ENCODE measurements at regions of chr9 and their contacts with region 1.

Region 1: GRCh38 chr9:68704814-68705530 is at the start of gene PIP5K1B:
- DNase-seq: peak; percentile 76
- H3K4me3 Mint-ChIP-seq: peak within 1 kb of the TSS; percentile 98
- H3K27ac Mint-ChIP-seq: no peak within 1 kb of the TSS
- H3K4me1 Mint-ChIP-seq: peaks cover 10% of the 10 kb centered on the region
- H3K27me3 Mint-ChIP-seq: peaks cover 36% of the 10 kb centered on the region
- CTCF ChIP-seq: no peak
- total RNA-seq, gene PIP5K1B: 8.6 and 9.0 TPM in 2 replicates

Region 2: DNA sequence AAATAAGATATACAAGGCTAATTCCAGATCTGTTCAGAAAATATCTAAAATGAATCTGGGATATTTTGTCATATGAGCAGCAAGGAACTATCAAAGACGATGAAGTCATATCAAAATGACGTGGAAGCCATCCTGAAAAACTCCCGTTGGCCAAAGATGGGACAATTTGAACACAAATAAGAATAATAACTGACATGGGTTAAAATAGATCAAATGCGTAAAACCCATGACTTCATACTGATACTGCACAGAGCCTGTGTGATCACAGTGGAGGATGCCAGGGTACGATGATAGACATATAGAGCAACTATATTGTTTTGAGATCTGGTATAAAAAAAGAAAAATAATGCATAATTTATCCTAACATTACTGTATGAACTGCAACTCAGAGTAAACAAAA is 50.9 kb before region 1 on chr9:
- CTCF ChIA-PET with region 1: no interaction called
- intact Hi-C with region 1: no loop called
- DNase-seq: no peak
- H3K4me3 Mint-ChIP-seq: no peak overlapping the region
- H3K27ac Mint-ChIP-seq: no peak overlapping the region
- H3K4me1 Mint-ChIP-seq: no peaks in the 10 kb centered on the region
- H3K27me3 Mint-ChIP-seq: no peaks in the 10 kb centered on the region
- CTCF ChIP-seq: no peak

Region 3: DNA sequence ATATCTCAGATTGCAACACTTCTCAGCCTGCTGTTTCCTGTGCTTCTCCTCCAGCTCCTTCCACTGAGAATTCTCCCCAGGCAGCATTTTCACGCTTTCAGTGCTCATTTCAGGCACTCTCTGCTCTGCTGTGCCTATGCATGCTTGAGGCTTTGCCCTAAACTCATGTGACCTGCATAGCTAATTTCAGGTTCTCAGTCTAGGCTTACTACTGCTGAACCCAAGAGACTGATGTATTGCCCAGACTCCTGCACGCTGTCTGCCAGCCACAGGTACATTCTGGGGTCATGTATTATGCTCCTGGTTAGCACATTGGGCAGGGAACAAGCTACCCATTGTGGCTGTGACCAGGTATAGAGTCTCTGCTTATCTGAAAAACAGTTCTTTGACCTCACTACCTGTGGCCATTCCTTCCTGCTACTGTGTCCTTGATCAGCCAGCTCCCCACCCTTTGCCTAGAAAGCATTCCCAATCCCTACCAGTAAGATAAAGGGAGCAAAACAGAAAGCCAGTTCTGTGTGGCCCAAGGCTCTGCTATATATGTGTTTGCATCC is 34.7 kb after region 1 on chr9:
- CTCF ChIA-PET with region 1: interaction called, 4 read pairs
- intact Hi-C with region 1: loop called (anchors 5 kb)
- DNase-seq: peak; percentile 53
- H3K4me3 Mint-ChIP-seq: peak overlapping the region; percentile 50
- H3K27ac Mint-ChIP-seq: peak overlapping the region; percentile 97
- H3K4me1 Mint-ChIP-seq: peaks cover 31% of the 10 kb centered on the region
- H3K27me3 Mint-ChIP-seq: no peaks in the 10 kb centered on the region
- CTCF ChIP-seq: no peak

Region 4: DNA sequence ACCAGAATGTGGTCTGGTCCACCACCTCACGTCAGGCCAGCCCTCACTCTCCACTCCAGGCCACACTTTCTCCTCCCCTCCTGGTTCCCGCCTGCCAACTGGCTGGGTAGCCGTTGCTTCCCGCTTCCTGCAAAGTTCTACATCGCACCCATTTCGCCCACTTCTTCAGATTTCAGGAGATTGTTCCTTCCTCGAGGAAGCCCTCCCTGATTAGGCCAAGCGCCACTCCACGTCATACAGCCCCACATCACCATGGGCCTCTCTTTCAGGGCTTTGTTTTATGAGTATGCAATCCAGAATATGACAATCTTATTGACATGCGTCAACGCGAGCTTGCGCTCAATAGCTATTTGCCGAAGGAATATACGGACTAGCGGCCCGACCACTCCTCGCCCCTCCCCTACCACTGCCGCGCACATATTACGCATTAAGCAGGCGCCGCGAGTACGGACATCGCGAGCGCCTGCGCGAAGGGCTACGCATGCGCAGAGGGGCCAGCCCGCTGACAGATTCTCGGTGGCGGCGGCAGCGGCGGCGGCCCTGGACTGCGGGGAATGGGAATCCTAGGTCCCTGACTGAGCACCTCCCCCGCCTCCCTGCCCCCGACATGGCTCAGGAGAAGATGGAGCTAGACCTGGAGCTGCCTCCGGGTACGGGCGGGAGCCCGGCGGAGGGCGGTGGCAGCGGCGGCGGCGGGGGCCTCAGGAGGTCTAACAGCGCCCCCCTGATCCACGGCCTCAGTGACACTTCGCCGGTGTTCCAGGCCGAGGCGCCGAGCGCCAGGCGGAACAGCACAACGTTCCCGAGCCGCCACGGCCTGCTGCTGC is 74.8 kb after region 1 on chr9:
- CTCF ChIA-PET with region 1: no interaction called
- intact Hi-C with region 1: loop called (anchors 5 kb)
- DNase-seq: peak; percentile 91
- H3K4me3 Mint-ChIP-seq: no peak overlapping the region
- H3K27ac Mint-ChIP-seq: no peak overlapping the region
- H3K4me1 Mint-ChIP-seq: no peaks in the 10 kb centered on the region
- H3K27me3 Mint-ChIP-seq: no peaks in the 10 kb centered on the region
- CTCF ChIP-seq: no peak

Region 5: GRCh38 chr9:69085569-69086283 is 380.8 kb after region 1 on chr9:
- CTCF ChIA-PET with region 1: no interaction called
- intact Hi-C with region 1: no loop called
- DNase-seq: no peak
- H3K4me3 Mint-ChIP-seq: no peak overlapping the region
- H3K27ac Mint-ChIP-seq: no peak overlapping the region
- H3K4me1 Mint-ChIP-seq: peaks cover 36% of the 10 kb centered on the region
- H3K27me3 Mint-ChIP-seq: no peaks in the 10 kb centered on the region
- CTCF ChIP-seq: no peak